Posterior vena cava (tissue), 2 donors: ENCODE measurements at regions of chr5 and their contacts with region 1.

Region 1: GRCh38 chr5:159444441-159445082 is 114.3 kb upstream of the IL12B start:
- DNase-seq: no peak

Region 2: GRCh38 chr5:159419576-159419975 is 25.0 kb before region 1 on chr5:
- intact Hi-C with region 1: no loop called
- DNase-seq: no peak

Region 3: GRCh38 chr5:159915904-159916840 is 471.6 kb after region 1 on chr5 and contains the start of gene ADRA1B:
- intact Hi-C with region 1: loop called (anchors 5 kb)
- DNase-seq: peak; percentile 91
- total RNA-seq, gene ADRA1B: 4.2 to 8.0 TPM

Region 4: GRCh38 chr5:159965031-159965837 is 520.7 kb after region 1 on chr5:
- intact Hi-C with region 1: loop called in 1 of 2 experiments (anchors 10 kb)
- DNase-seq: peak; percentile 87

Region 5: DNA sequence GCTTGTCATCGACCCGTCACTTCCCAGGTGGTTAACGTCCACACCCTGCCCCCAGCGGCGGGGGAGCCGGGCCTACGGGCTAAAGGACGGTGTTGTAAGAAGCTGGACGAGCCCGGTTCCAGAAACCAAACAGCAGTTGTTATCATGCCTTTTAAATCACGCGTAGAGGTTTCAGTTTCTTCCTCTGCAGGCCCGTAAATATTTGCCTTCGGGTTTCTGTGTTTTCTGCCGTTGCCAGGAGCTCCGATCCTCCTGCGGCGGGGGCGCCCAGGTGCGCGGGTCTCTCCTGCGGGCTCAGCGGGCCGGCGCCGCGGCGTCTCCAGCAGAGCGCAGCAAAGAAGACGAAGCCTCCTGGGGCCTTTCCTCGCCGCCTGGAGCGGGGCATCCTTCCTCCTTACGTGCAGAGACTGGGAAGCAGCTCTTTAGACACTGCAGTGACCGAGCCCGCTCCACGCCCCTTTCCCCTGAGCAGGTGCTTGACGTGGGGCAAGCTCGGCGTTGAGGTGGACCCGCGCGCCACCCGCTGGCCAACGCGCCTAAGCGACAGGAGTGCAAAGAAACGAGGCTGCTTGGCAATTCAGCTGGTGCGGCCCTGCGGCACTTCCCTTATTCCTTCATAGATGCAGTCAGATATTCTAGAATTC is 542.6 kb after region 1 on chr5:
- intact Hi-C with region 1: loop called in 1 of 2 experiments (anchors 5 kb)
- DNase-seq: peak; percentile 89